ENCODE measurements at regions of chr1 and their contacts with region 1.

Region 1: DNA sequence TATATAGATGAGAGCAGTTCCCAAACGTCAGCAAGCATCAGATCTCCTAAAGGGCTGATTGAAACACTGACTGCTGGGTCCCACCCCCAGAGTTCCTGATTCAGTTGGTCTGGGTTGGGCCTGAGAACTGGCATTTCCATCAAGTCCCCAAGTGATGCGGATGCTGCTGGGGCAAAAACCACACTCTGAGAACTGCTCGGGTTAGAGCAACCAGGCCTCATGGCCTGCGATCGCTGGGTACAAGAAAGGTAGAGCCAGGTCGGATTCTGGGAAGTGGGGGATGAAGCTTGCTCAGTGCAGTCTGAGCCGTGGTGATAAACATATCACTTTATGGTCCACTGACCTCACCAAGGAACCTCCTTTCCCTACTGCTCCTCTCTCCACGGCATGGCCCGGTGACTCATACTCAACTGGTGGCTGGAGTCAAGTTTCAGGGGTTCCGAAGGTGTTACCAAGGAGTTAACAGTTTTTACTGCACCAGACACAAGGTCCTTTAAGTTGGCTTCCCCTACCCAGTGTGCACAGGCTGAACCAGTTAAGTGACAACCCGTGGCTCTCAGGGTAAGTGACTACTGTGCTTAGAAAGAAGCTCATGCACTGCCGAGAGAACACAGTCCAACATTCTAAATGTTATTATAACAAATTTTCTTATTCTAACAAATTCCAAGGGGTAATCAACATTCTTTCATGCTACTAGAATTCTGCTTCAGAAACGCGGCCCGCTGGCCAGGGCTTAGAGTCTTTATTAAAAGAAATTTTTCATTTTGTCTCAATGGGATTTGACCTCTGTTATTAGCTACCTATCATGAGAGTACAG is 153.5 kb downstream of the TGFBR3 start:
- DNase-seq: peak; percentile 89
- ATAC-seq: peak; percentile 66
- H3K4me3 ChIP-seq: no peak overlapping the region; the same call in 1 of the 2 replicates
- H3K27ac ChIP-seq: peak overlapping the region; percentile 72
- H3K4me1 ChIP-seq: peaks cover 51% of the 10 kb centered on the region
- H3K27me3 ChIP-seq: no peaks in the 10 kb centered on the region
- CTCF ChIP-seq: no peak

Region 2: GRCh38 chr1:91546876-91547275 is 185.6 kb before region 1 on chr1:
- CTCF ChIA-PET with region 1: no interaction called
- POLR2A ChIA-PET with region 1: no interaction called
- intact Hi-C with region 1: loop called (anchors 1 kb)
- DNase-seq: peak; percentile 52
- ATAC-seq: peak; percentile 88
- H3K4me3 ChIP-seq: no peak overlapping the region
- H3K27ac ChIP-seq: no peak overlapping the region
- H3K4me1 ChIP-seq: no peaks in the 10 kb centered on the region
- H3K27me3 ChIP-seq: no peaks in the 10 kb centered on the region
- CTCF ChIP-seq: peak; percentile 68

Region 3: GRCh38 chr1:91795591-91796389 is 63.3 kb after region 1 on chr1:
- CTCF ChIA-PET with region 1: no interaction called
- POLR2A ChIA-PET with region 1: no interaction called
- intact Hi-C with region 1: loop called (anchors 5 kb)
- DNase-seq: peak; percentile 77
- ATAC-seq: peak; percentile 90
- H3K4me3 ChIP-seq: peak overlapping the region; percentile 16; the same call in 1 of the 2 replicates
- H3K27ac ChIP-seq: peak overlapping the region; percentile 27
- H3K4me1 ChIP-seq: peaks cover 28% of the 10 kb centered on the region
- H3K27me3 ChIP-seq: no peaks in the 10 kb centered on the region
- CTCF ChIP-seq: no peak

Region 4: DNA sequence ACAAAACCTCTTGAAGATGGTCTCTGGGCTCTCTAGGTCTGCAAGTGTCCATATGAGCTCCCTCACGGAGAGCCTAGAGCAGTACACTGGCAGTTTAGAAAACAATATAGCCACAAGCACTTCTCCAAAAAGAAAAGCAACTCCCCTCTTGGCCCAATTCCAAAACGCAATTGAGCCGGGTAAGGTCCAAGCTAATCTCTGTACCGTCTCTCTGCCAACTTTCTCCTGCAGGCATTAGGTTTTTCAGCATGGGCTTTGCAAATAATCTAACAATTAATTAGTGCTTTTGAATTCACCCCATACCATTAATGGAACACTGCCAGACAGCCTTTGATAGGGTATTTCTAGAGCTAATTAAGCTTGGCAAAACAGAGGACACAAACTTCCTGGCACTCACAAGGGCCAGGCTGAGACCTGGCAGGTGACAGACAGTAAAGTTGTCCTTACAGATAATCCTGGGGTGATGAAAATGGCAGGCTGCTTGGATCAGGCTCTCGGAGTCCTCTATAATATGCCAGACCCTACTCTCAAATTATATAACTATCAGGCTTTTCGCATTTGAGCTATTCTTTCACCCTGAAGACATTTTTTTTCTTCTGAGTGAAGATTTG is 113.6 kb after region 1 on chr1:
- CTCF ChIA-PET with region 1: no interaction called
- POLR2A ChIA-PET with region 1: interaction called, 3 read pairs
- intact Hi-C with region 1: loop called (anchors 2 kb)
- DNase-seq: peak; percentile 59
- ATAC-seq: peak; percentile 4; the same call in 1 of the 2 replicates
- H3K4me3 ChIP-seq: no peak overlapping the region
- H3K27ac ChIP-seq: peak overlapping the region; percentile 69; the same call in 1 of the 2 replicates
- H3K4me1 ChIP-seq: peaks cover 30% of the 10 kb centered on the region
- H3K27me3 ChIP-seq: no peaks in the 10 kb centered on the region
- CTCF ChIP-seq: no peak

Region 5: DNA sequence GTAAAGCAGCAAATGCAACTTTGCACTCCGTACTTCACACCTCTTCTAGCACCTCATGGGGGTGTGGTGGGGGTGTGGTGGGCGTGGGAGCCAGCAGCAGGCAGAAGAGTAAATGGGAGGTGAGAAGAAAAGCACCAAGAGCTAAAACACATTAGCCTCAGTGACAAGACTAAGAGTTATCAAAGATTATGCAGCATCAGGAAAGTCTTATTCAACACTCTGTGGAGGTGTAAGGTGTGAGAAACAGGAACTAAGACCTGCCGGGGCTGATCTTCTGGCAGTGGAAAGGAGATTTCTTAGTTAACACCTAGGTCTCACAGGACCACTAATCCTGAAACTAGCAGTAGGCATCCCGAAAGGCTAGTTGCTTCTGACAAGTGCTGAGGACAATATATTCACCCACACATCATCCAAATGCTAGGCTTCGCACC is 143.6 kb after region 1 on chr1:
- CTCF ChIA-PET with region 1: no interaction called
- POLR2A ChIA-PET with region 1: no interaction called
- intact Hi-C with region 1: no loop called
- DNase-seq: no peak
- ATAC-seq: no peak
- H3K4me3 ChIP-seq: no peak overlapping the region
- H3K27ac ChIP-seq: no peak overlapping the region
- H3K4me1 ChIP-seq: peaks cover 33% of the 10 kb centered on the region
- H3K27me3 ChIP-seq: no peaks in the 10 kb centered on the region
- CTCF ChIP-seq: no peak

Region 6: DNA sequence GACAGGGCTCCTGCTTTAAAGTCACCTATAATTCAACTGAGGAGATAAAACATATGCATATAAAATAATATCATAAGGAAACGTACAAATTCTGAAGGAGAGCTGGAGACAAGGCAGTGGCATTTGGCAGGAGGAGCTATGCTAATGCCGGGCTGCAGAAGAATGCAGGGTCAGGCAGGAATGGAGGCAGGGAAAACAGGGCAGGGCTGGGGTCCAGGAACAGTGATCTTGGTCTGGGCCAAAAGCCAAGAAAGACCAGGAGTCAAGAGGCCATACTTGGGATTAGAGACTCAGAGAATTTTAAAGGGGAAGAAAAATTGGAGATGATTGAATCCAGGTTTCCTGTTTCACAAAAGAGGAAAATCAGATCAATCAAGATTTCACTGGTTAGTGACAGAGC is 196.8 kb after region 1 on chr1:
- CTCF ChIA-PET with region 1: no interaction called
- POLR2A ChIA-PET with region 1: no interaction called
- intact Hi-C with region 1: loop called (anchors 5 kb)
- DNase-seq: no peak
- ATAC-seq: no peak
- H3K4me3 ChIP-seq: no peak overlapping the region
- H3K27ac ChIP-seq: no peak overlapping the region
- H3K4me1 ChIP-seq: no peaks in the 10 kb centered on the region; the same call in 1 of the 2 replicates
- H3K27me3 ChIP-seq: no peaks in the 10 kb centered on the region
- CTCF ChIP-seq: no peak

Measured in PC-3 (cell line).